ENCODE measurements at regions of chr7 and their contacts with region 1.

Region 1: GRCh38 chr7:44847508-44847920 is 373 bp downstream of the H2AZ2 start:
- DNase-seq: peak; percentile 81
- H3K4me3 Mint-ChIP-seq: peak overlapping the region; percentile 90
- H3K27ac Mint-ChIP-seq: peak overlapping the region; percentile 98
- H3K4me1 Mint-ChIP-seq: peaks cover 54% of the 10 kb centered on the region
- H3K27me3 Mint-ChIP-seq: no peaks in the 10 kb centered on the region

Region 2: DNA sequence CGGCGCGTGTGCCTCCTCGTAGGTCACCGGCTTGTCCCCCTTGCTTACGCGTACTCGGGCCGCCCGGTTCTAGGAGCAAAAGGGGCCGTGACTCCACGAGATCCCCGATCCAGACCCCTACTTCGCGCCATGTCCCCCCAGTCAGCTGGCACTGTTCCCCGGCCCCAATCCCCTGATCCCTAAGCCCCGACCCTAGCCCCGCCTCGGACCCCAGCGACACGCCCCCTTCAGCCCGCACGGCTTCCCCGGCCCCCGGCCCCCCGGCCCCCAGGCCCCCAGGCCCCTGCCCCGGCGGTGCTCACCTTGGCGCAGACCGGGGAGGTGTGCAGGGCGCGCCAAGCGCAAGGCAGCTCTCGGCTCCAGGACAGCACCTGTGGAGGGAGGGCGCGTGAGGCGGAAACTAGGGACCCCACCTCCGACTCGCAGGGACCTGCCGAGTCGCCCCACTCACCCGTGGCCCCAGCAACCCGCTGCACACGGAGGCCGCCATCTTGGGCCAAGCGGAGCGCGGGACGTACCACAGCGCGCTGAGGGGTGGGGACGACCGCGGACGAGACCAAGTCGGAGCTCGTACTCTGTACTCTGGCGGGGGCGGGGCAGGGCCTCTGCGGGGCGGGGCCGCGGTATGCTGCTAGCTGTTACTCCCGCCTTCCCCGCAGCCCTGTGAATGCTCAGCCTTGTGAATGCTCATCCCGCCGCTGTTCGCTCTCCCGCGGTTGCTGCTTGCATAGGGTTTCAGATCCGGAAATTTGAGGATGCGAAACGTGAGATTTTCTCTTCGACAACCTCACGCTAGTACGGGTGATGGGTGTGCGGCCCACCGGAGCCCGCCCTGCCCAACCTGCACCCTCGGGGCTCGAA is 978.3 kb before region 1 on chr7 and contains the start of gene MRPS24:
- intact Hi-C with region 1: no loop called
- DNase-seq: peak; percentile 88
- H3K4me3 Mint-ChIP-seq: peak within 1 kb of the TSS; percentile 85
- H3K27ac Mint-ChIP-seq: peak within 1 kb of the TSS; percentile 85
- H3K4me1 Mint-ChIP-seq: peaks cover 23% of the 10 kb centered on the region
- H3K27me3 Mint-ChIP-seq: no peaks in the 10 kb centered on the region
- total RNA-seq, gene MRPS24: 118 and 125 TPM in 2 replicates

Region 3: DNA sequence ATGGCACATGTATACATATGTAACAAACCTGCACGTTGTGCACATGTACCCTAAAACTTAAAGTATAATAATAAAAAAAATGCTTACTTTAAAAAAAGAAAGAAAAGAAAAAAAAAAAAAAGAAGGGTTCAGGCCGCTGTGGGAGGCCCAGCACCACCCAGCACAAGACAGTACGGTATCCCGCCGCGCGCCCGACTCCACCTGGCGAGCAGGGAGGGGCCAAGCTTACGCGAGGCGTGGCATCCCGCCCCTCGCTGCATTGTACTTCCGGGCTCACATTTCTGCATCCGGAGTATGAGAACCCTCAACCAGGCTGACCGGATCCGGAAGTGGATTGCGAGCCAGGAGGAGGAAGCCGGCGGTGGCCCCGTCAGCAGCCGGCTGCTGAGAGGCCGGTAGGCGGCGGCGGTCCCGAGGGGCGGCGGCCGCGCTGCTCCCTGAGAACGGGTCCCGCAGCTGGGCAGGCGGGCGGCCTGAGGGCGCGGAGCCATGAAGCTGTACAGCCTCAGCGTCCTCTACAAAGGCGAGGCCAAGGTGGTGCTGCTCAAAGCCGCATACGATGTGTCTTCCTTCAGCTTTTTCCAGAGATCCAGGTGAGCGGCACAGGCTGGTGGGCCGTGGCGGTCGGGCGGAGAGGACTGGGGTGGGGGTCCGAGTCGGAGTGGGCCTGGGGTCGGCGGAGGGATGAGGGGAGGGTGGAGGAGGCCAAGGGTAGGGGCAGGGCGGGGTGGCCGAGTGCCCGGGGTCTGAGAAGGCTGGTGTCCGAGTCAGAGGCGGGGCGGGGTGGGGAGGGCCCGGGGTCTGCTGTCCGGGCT is 646.7 kb before region 1 on chr7 and contains the start of gene YKT6:
- intact Hi-C with region 1: loop called (anchors 1 kb)
- DNase-seq: peak; percentile 94
- H3K4me3 Mint-ChIP-seq: peak within 1 kb of the TSS; percentile 88
- H3K27ac Mint-ChIP-seq: peak within 1 kb of the TSS; percentile 52
- H3K4me1 Mint-ChIP-seq: peaks cover 37% of the 10 kb centered on the region
- H3K27me3 Mint-ChIP-seq: no peaks in the 10 kb centered on the region
- total RNA-seq, gene YKT6: 91.8 and 92.1 TPM in 2 replicates

Region 4: DNA sequence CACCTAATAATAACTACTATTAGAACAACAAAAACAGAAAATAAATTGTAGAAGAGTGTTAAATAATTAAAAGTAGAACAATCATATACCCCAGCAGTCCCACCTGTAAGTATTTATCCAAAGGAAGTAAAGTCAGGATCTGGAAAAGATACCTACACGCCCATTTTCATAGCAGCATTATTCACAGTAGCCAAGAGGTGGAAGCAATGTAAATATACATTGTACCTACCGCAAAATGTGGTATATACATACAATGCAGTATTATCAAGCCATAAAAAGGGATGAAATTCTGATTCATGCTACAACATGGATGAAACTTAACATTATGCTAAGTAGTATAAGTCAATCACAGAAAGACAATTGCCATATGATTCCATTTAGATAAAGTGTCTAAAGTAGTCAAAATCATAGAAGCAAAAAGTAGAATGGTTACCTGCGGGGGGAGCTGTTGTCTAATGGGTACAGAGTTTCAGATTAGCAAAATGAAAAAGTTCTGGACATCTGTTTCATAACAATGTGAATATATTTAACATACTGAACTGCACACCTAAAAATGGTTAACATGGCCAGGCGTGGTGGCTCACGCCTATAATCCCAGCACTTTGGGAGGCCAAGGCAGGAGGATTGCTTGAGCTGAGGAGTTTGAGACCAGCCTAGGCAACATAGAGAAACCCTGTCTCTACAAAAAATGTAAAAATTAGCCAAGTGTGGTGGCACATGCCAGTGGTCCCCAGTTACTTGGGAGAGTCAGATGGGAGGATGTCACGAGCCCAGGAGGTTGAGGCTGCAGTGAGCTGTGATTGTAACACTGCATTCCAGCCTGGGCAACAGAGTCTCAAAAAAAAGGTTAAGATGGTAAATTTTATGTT is 259.4 kb before region 1 on chr7:
- intact Hi-C with region 1: loop called (anchors 1 kb)
- DNase-seq: peak; percentile 42
- H3K4me3 Mint-ChIP-seq: no peak overlapping the region
- H3K27ac Mint-ChIP-seq: no peak overlapping the region
- H3K4me1 Mint-ChIP-seq: peaks cover 10% of the 10 kb centered on the region
- H3K27me3 Mint-ChIP-seq: peaks cover 3% of the 10 kb centered on the region

Region 5: GRCh38 chr7:44797329-44798251 is 49.9 kb before region 1 on chr7:
- intact Hi-C with region 1: loop called (anchors 1 kb)
- DNase-seq: peak; percentile 81
- H3K4me3 Mint-ChIP-seq: peak overlapping the region; percentile 94
- H3K27ac Mint-ChIP-seq: peak overlapping the region; percentile 94
- H3K4me1 Mint-ChIP-seq: peaks cover 34% of the 10 kb centered on the region
- H3K27me3 Mint-ChIP-seq: no peaks in the 10 kb centered on the region

Region 6: DNA sequence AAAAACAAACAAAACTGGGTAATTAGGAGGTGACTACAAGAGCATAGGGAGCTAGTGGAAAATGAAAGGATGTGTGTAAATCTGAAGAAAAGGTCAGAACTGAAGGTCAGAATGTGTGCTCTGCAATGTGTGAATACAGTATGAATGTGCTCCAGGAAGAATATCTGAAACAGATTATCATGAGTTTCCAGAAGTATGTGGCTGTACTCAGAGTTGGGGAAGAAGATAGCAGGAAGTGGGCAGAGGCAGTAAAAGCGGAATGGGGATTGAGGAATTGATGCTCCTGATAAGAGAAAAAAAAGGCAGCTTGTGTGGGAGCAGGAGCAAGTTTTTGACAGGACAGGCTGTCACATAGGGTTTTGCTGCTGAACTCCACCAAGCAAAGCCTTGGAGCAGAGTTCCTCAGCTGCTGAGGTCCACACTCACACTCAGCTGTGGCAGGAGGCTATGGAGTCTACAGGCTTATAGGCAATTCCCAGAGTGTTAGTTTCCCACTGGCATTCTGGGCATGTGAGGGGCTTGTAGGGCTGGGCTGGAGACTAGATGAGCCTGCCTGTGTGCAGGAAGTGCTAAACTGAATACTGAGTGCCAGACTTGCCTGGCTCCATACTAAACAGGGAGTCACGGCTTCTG is 22.5 kb before region 1 on chr7:
- intact Hi-C with region 1: no loop called
- DNase-seq: no peak
- H3K4me3 Mint-ChIP-seq: no peak overlapping the region
- H3K27ac Mint-ChIP-seq: peak overlapping the region; percentile 72
- H3K4me1 Mint-ChIP-seq: peaks cover 9% of the 10 kb centered on the region
- H3K27me3 Mint-ChIP-seq: no peaks in the 10 kb centered on the region

Region 7: GRCh38 chr7:44921607-44922359 is 74.3 kb after region 1 on chr7:
- intact Hi-C with region 1: loop called (anchors 1 kb)
- DNase-seq: peak; percentile 86
- H3K4me3 Mint-ChIP-seq: no peak overlapping the region
- H3K27ac Mint-ChIP-seq: peak overlapping the region; percentile 79
- H3K4me1 Mint-ChIP-seq: peaks cover 15% of the 10 kb centered on the region
- H3K27me3 Mint-ChIP-seq: peaks cover 7% of the 10 kb centered on the region

Region 8: GRCh38 chr7:45136106-45137060 is 288.9 kb after region 1 on chr7:
- intact Hi-C with region 1: loop called (anchors 2 kb)
- DNase-seq: peak; percentile 55
- H3K4me3 Mint-ChIP-seq: no peak overlapping the region
- H3K27ac Mint-ChIP-seq: no peak overlapping the region
- H3K4me1 Mint-ChIP-seq: peaks cover 19% of the 10 kb centered on the region
- H3K27me3 Mint-ChIP-seq: peaks cover 10% of the 10 kb centered on the region

Measured in activated T-helper 1 cell treated with anti-CD3 and anti-CD28 coated beads, Interleukin-12 subunit alpha, Interleukin-12 subunit beta, Interleukin-2, Interleukin-4 antibody, amounts not matched to agents 30 ng/mL and 10 ng/mL and 1 ng/mL, durations not matched to agents 14 hours and 24 hours and 36 hours (primary cell).